Breast epithelium (tissue), 4 donors: ENCODE measurements at regions of chr9 and their contacts with region 1.

Region 1: GRCh38 chr9:69719983-69720382 is 39.8 kb downstream of the PTAR1 start:
- DNase-seq: no peak
- H3K4me3 ChIP-seq: no peak overlapping the region
- H3K27ac ChIP-seq: no peak overlapping the region
- H3K4me1 ChIP-seq: no peaks in the 10 kb centered on the region
- H3K27me3 ChIP-seq: no peaks in the 10 kb centered on the region
- CTCF ChIP-seq: no peak
- POLR2A ChIP-seq: no peak

Region 2: GRCh38 chr9:69444021-69444420 is 276.0 kb before region 1 on chr9:
- intact Hi-C with region 1: loop called (anchors 10 kb)
- DNase-seq: no peak
- H3K4me3 ChIP-seq: no peak overlapping the region
- H3K27ac ChIP-seq: no peak overlapping the region
- H3K4me1 ChIP-seq: no peaks in the 10 kb centered on the region
- H3K27me3 ChIP-seq: no peaks in the 10 kb centered on the region
- CTCF ChIP-seq: no peak
- POLR2A ChIP-seq: no peak

Region 3: GRCh38 chr9:69527454-69527853 is 192.5 kb before region 1 on chr9:
- intact Hi-C with region 1: no loop called
- DNase-seq: no peak
- H3K4me3 ChIP-seq: no peak overlapping the region
- H3K27ac ChIP-seq: no peak overlapping the region
- H3K4me1 ChIP-seq: no peaks in the 10 kb centered on the region
- H3K27me3 ChIP-seq: no peaks in the 10 kb centered on the region
- CTCF ChIP-seq: no peak
- POLR2A ChIP-seq: no peak